ENCODE measurements at regions of chr16 and their contacts with region 1.

Region 1: DNA sequence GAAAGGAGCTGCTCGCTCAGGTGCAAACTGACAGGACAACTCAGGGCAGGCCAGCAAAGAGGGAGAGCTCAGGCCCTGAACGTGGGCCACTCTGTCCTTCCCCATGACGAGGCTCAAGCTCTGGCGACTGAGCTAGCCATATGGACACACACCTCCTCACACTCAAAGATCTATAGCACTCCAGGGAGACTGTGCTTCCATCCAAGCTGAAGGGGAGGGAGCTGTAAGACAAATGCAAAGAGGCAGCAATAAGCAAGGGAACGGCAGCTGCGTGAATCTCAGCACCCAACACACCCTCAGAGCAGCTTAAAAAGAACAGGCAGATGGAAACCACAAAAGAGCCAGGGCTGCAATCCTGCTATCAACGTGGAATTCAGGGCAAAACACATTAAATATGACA is 13.5 kb downstream of the NUDT16L1 start:
- DNase-seq: peak in 1 of 2 donors; percentile 23
- ATAC-seq: no peak
- H3K4me3 ChIP-seq: no peak overlapping the region
- H3K27ac ChIP-seq: no peak overlapping the region
- H3K4me1 ChIP-seq: no peaks in the 10 kb centered on the region
- H3K27me3 ChIP-seq: no peaks in the 10 kb centered on the region
- CTCF ChIP-seq: no peak

Region 2: GRCh38 chr16:4726616-4727015 is 19.7 kb after region 1 on chr16:
- intact Hi-C with region 1: loop called in 1 of 2 experiments (anchors 1 kb)
- DNase-seq: peak in 1 of 2 donors; percentile 40
- ATAC-seq: peak in 1 of 4 donors; percentile 36
- H3K4me3 ChIP-seq: no peak overlapping the region
- H3K27ac ChIP-seq: no peak overlapping the region
- H3K4me1 ChIP-seq: no peaks in the 10 kb centered on the region
- H3K27me3 ChIP-seq: no peaks in the 10 kb centered on the region
- CTCF ChIP-seq: no peak

Measured in psoas muscle (tissue), 8 donors.